Gastrocnemius medialis (tissue), 4 donors: ENCODE measurements at regions of chr11 and their contacts with region 1.

Region 1: GRCh38 chr11:35246745-35247144 is 107.8 kb downstream of the CD44 start:
- DNase-seq: no peak
- ATAC-seq: peak; percentile 42 to 51
- H3K4me3 ChIP-seq: no peak overlapping the region
- H3K27ac ChIP-seq: peak overlapping the region; percentile 11 to 59 (median 48)
- H3K4me1 ChIP-seq: peaks cover 4 to 9% of the 10 kb centered on the region in 2 donors
- H3K27me3 ChIP-seq: no peaks in the 10 kb centered on the region
- CTCF ChIP-seq: no peak
- POLR2A ChIP-seq: no peak

Region 2: DNA sequence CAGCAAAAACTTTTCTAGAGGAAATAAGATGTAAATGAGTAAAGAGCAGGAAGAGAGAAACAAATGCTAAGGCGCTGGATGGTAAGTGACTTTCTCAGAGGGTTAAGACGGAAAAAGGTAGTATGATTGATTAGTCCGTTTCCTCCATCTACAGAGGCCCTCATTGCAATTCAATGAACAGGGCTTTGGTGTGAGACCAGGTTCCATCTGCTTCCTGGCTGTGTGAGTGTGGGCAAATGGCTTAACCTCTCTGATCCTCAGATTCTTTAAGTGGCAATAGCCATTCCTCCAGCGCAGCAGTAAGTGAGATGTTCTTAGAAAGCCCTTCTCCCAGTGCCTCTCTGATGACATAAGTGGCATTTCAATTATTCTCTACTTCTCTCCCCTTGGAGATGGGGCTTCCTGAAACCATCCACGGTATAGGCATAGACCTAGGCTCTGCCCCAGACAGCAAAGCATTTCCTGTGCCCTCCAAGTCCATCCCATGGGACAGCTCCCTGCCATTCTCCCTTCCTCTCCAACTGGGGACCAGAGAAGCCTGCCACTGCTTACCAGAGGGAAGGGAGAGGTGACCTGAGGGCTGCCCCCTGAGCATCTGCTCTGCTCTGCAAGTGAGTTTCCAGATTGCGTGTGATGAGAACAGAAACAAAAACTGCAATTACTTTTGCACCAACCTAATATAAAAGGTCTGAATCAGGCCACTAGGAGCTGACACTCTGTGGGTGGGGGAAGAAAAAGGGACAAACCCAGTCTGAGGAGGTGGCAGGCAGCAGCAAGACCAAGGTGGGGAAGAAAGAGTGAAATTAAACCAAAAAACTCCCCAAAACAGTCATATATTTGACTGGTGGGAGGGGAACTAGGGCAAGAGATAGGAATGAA is 120.5 kb before region 1 on chr11:
- in situ Hi-C with region 1: no loop called
- intact Hi-C with region 1: no loop called
- DNase-seq: no peak
- ATAC-seq: no peak
- H3K4me3 ChIP-seq: no peak overlapping the region
- H3K27ac ChIP-seq: no peak overlapping the region
- H3K4me1 ChIP-seq: no peaks in the 10 kb centered on the region
- H3K27me3 ChIP-seq: no peaks in the 10 kb centered on the region
- CTCF ChIP-seq: no peak
- POLR2A ChIP-seq: no peak

Region 3: GRCh38 chr11:35363854-35364780 is 117.4 kb after region 1 on chr11:
- in situ Hi-C with region 1: no loop called
- intact Hi-C with region 1: loop called (anchors 10 kb)
- DNase-seq: peak; percentile 89 to 93
- ATAC-seq: peak; percentile 83 to 86
- H3K4me3 ChIP-seq: no peak overlapping the region
- H3K27ac ChIP-seq: peak overlapping the region; percentile 64 to 86 (median 77)
- H3K4me1 ChIP-seq: peaks cover 24 to 40% of the 10 kb centered on the region in 2 donors
- H3K27me3 ChIP-seq: no peaks in the 10 kb centered on the region
- CTCF ChIP-seq: no peak
- POLR2A ChIP-seq: peak in 1 of 2 donors; percentile 10

Region 4: DNA sequence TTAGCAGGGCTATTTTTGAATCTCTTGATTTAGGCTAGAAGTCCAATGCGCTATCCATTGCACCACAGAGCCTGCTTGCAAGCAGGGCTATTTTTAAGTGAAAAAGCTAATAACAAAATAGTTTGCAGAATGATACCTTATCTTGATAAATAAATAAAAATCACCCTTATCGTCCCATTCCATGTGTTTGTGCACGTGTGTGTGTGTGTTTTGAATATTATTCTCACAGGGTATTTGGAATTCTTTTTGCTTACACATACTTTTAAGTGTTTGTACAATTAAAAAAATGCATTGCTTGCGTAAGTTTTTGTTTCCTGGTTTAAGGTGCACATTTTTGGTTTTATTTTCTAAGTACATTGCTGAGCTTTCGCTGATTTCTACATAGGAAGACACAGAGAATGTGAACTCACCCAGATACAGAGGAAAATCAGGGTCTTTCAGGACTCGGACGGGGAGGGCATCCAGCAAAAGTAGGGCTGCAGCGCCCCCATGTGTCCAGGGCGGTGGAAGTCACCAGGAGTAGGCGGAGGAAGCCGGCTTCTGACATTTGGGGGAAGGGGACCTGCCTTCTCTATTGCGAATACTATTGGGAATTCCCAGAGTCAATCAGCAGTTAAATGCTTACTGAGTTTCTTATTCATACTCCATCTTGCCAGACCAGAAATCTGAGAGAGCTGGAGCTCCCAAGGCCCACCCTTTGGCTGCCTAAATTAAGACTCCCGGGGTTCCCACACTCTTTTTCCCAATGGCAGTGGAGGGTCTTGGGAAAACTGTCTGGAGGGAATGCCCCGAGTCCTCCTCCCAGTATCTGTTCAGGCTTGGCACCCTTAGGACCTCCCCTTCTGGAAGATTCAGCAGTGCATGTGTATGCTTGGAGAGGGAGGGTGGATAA is 145.4 kb after region 1 on chr11:
- in situ Hi-C with region 1: loop called in 1 of 4 experiments (anchors 10 kb)
- intact Hi-C with region 1: no loop called
- DNase-seq: peak; percentile 26 to 52
- ATAC-seq: peak; percentile 61 to 65
- H3K4me3 ChIP-seq: peak overlapping the region in 1 of 4 donors; percentile 29
- H3K27ac ChIP-seq: no peak overlapping the region
- H3K4me1 ChIP-seq: peaks cover 3 to 4% of the 10 kb centered on the region in 2 donors
- H3K27me3 ChIP-seq: no peaks in the 10 kb centered on the region
- CTCF ChIP-seq: peak; percentile 80 to 88 (median 83)
- POLR2A ChIP-seq: no peak